HepG2 (cell line): ENCODE measurements at regions of chr1 and their contacts with region 1.

Region 1: GRCh38 chr1:231603598-231604275 is 22.9 kb upstream of the DISC1 start:
- DNase-seq: peak; percentile 69
- ATAC-seq: peak; percentile 88
- H3K4me3 ChIP-seq: peak overlapping the region; percentile 55 to 77 (median 75)
- H3K27ac ChIP-seq: peak overlapping the region; percentile 9
- H3K4me1 ChIP-seq: peaks cover 12% of the 10 kb centered on the region; the same call in 1 of the 2 replicates
- H3K27me3 ChIP-seq: no peaks in the 10 kb centered on the region
- CTCF ChIP-seq: peak; percentile 65
- EP300 ChIP-seq: no peak
- POLR2A ChIP-seq: no peak
- RAD21 ChIP-seq: peak; percentile 61

Region 2: DNA sequence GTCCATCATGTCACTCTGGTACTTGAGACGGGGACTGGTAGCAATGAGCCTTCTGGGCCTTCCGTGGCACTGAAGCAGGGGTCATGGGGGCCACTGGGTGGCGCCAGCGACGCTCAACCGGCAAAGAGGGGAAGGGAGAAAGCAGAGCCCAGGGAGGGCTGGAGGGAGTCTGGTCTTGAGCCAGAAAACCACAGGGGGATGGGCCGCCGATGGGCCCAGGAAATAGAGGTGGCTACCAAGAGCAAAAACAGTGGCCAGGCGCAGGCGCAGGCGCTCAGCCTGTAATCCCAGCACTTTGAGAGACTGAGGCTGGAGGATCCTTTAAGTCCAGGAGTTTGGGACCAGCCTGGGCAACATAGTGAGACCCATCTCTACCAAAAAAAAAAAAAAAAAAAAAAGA is 287.9 kb before region 1 on chr1:
- CTCF ChIA-PET with region 1: interaction called, 10 read pairs
- POLR2A ChIA-PET with region 1: no interaction called
- in situ Hi-C with region 1: no loop called
- intact Hi-C with region 1: loop called (anchors 1 kb)
- DNase-seq: peak; percentile 51
- ATAC-seq: peak; percentile 98
- H3K4me3 ChIP-seq: no peak overlapping the region
- H3K27ac ChIP-seq: no peak overlapping the region
- H3K4me1 ChIP-seq: no peaks in the 10 kb centered on the region
- H3K27me3 ChIP-seq: 0 out of 5 replicates have a peak, but pooled peaks cover 0 to 2% of the 10 kb centered on the region in 2 experiments
- CTCF ChIP-seq: peak; percentile 84
- EP300 ChIP-seq: no peak
- POLR2A ChIP-seq: no peak
- RAD21 ChIP-seq: peak; percentile 70; the same call in 1 of the 2 replicates

Region 3: GRCh38 chr1:231679109-231679508 is 75.4 kb after region 1 on chr1:
- CTCF ChIA-PET with region 1: no interaction called
- POLR2A ChIA-PET with region 1: no interaction called
- in situ Hi-C with region 1: no loop called
- intact Hi-C with region 1: no loop called
- DNase-seq: no peak
- ATAC-seq: no peak
- H3K4me3 ChIP-seq: no peak overlapping the region
- H3K27ac ChIP-seq: no peak overlapping the region
- H3K4me1 ChIP-seq: peaks cover 68% of the 10 kb centered on the region
- H3K27me3 ChIP-seq: no peaks in the 10 kb centered on the region
- CTCF ChIP-seq: no peak
- EP300 ChIP-seq: no peak
- POLR2A ChIP-seq: no peak
- RAD21 ChIP-seq: no peak